Breast epithelium (tissue), 4 donors: ENCODE measurements at regions of chr20 and their contacts with region 1.

Region 1: DNA sequence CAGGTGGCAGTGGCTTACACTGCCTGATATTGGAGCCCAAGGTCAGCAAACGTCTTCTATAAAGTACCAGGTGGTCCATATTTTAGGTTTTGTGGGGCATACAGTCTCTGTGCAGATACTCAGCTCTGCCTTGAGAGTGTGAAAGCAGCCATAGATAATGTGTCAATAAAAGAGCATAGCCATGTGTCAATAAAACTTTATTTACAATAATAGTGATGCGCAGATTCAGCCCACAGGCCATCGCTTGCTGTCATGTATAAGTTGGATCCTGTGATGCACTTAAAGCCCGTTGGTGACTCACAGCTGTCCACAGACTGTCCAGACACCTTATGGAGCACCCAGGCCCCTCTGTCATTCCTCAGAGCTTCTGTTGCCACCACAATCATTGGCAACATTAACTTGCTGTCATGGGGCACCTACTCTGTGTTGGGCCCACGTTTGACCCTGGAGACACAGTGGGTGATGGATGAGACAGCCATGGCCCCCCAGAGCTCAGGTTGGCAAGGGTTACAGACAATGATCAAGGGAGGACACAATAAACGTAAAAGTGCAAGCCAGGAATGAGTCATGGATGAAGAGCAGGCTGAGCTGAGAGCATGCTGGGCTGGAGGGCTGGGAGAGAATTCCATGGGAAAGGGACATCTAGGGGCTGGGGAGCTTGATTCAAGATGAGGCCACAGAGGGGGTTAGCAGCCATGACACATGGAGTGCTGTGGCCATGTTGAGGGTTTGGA is 173.6 kb downstream of the TAF4 start:
- DNase-seq: no peak
- H3K4me3 ChIP-seq: no peak overlapping the region
- H3K27ac ChIP-seq: no peak overlapping the region
- H3K4me1 ChIP-seq: no peaks in the 10 kb centered on the region
- H3K27me3 ChIP-seq: peaks cover 0 to 18% of the 10 kb centered on the region in 2 donors
- CTCF ChIP-seq: no peak
- POLR2A ChIP-seq: no peak

Region 2: GRCh38 chr20:61694682-61695081 is 197.4 kb before region 1 on chr20:
- intact Hi-C with region 1: loop called (anchors 5 kb)
- DNase-seq: no peak
- H3K4me3 ChIP-seq: no peak overlapping the region
- H3K27ac ChIP-seq: no peak overlapping the region
- H3K4me1 ChIP-seq: no peaks in the 10 kb centered on the region
- H3K27me3 ChIP-seq: peaks cover 0 to 22% of the 10 kb centered on the region in 2 donors
- CTCF ChIP-seq: no peak
- POLR2A ChIP-seq: no peak